ENCODE measurements at regions of chr5 and their contacts with region 1.

Region 1: GRCh38 chr5:37717613-37718431 is 122.0 kb downstream of the GDNF start:
- DNase-seq: peak; percentile 95
- ATAC-seq: peak; percentile 98
- H3K4me3 ChIP-seq: peak overlapping the region in 2 of 3 experiments; percentile 14 to 24; a peak in 1 of 6 replicates
- H3K27ac ChIP-seq: peak overlapping the region; percentile 67
- H3K4me1 ChIP-seq: peaks cover 41% of the 10 kb centered on the region
- H3K27me3 ChIP-seq: no peaks in the 10 kb centered on the region
- CTCF ChIP-seq: no peak
- EP300 ChIP-seq: peak in 1 of 2 experiments; percentile 92; a peak in 2 of 4 replicates
- POLR2A ChIP-seq: no peak
- RAD21 ChIP-seq: no peak

Region 2: DNA sequence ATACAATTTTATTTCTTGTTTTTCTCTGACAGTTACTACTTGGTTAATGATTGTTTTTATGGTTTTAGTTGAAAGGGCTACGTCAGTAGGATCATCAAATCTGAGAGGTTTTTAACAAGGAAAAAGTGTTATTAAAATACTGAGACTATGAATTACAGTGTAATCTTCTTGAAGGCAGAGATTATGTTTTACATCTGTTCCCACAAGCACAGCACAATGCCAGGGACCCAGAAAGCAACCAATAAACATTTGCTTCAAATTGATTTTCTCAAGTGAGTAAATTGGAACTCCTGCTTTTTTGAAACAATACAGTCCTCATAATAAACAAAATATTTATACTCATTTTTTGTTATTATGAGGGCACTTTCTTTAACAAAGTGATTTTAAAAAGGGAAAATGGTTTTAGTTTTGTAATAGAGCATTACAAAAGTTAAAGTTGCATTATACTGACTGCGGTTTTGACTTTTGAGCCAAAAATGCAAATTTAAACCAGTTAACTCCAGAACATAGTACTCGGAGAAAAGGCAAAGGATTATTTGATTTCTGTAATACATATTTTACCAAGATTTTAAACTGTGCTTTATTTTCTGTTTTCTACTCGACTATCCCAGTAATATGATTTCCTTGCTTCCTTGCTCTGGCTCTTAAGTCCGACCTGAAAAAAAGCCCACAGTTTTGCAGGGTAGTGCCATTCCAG is 54.9 kb before region 1 on chr5:
- CTCF ChIA-PET with region 1: no interaction called
- POLR2A ChIA-PET with region 1: no interaction called
- in situ Hi-C with region 1: no loop called
- intact Hi-C with region 1: loop called (anchors 5 kb)
- DNase-seq: no peak
- ATAC-seq: no peak
- H3K4me3 ChIP-seq: no peak overlapping the region
- H3K27ac ChIP-seq: no peak overlapping the region
- H3K4me1 ChIP-seq: peaks cover 42% of the 10 kb centered on the region
- H3K27me3 ChIP-seq: no peaks in the 10 kb centered on the region
- CTCF ChIP-seq: no peak
- EP300 ChIP-seq: no peak
- POLR2A ChIP-seq: no peak
- RAD21 ChIP-seq: no peak

Region 3: GRCh38 chr5:37683072-37683471 is 34.8 kb before region 1 on chr5:
- CTCF ChIA-PET with region 1: no interaction called
- POLR2A ChIA-PET with region 1: no interaction called
- in situ Hi-C with region 1: no loop called
- intact Hi-C with region 1: no loop called
- DNase-seq: no peak
- ATAC-seq: no peak
- H3K4me3 ChIP-seq: no peak overlapping the region
- H3K27ac ChIP-seq: no peak overlapping the region
- H3K4me1 ChIP-seq: no peaks in the 10 kb centered on the region
- H3K27me3 ChIP-seq: no peaks in the 10 kb centered on the region
- CTCF ChIP-seq: no peak
- EP300 ChIP-seq: no peak
- POLR2A ChIP-seq: no peak
- RAD21 ChIP-seq: no peak